SK-N-SH (cell line): ENCODE measurements at regions of chr7 and their contacts with region 1.

Region 1: DNA sequence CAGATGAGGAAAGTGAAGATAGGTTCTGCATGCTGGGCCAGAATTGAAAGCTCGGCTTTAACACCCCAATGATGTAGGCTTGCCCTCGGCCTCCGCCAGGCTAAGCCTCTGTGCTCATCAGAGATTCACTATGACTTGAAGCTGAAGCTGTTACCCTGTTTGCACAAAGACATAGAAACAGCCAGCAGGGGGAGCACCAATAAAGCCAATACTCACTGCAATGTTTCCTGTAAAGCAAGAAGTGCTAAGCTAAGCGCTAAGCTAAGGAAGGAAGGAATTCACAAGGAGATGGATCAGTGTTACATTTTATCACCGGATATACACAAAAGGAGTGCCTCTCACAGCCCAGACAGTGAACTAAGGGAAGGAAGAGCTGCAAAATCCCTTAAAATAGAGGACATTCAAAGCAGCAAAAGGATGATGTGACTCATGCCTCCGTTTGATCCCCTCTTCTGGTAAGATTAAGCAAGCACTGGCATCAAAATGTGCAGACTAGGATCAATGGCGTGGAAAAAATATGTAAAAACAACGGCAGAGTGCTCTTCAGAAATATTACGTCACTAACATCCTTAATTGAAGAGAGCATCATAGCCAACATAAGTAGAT is 153.8 kb downstream of the COBL start:
- DNase-seq: peak; percentile 64
- H3K4me3 ChIP-seq: no peak overlapping the region; a peak in 1 of 4 replicates
- H3K27ac ChIP-seq: no peak overlapping the region
- H3K4me1 ChIP-seq: no peaks in the 10 kb centered on the region
- H3K27me3 ChIP-seq: peaks cover 12% of the 10 kb centered on the region; the same call in 1 of the 2 replicates
- CTCF ChIP-seq: peak; percentile 99
- EP300 ChIP-seq: no peak
- RAD21 ChIP-seq: peak; percentile 83

Region 2: DNA sequence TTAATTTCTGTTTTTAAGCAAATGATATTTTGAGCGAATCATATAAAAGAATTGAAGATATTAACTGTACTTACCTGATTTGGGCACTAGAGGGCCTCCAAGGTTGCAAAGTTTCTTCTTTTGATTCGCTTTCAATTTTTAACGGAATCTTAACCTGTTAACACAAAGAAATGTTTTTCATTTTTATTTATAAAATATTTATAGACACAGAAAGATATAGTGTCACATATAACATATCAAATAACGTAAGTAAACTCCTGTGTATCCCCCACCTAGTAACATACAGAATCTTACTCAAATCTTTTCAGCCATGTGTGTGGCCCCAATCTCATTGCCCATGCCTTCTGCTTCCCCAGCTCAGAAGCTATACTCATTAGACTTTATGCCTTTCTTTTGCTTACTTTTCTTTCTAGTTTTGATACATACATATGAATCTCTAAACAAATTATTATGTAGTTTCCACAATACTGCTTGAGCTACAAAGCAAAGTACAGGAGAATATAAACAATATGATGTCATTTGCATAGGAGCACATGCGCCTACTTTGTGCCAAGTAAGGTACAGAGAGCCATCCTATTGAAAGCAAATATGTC is 1020.3 kb before region 1 on chr7:
- CTCF ChIA-PET with region 1: interaction called, 15 read pairs
- POLR2A ChIA-PET with region 1: no interaction called
- DNase-seq: no peak
- H3K4me3 ChIP-seq: no peak overlapping the region; a peak in 1 of 4 replicates
- H3K27ac ChIP-seq: no peak overlapping the region
- H3K4me1 ChIP-seq: no peaks in the 10 kb centered on the region
- H3K27me3 ChIP-seq: no peaks in the 10 kb centered on the region
- CTCF ChIP-seq: peak; percentile 93
- EP300 ChIP-seq: no peak
- RAD21 ChIP-seq: peak; percentile 82

Region 3: DNA sequence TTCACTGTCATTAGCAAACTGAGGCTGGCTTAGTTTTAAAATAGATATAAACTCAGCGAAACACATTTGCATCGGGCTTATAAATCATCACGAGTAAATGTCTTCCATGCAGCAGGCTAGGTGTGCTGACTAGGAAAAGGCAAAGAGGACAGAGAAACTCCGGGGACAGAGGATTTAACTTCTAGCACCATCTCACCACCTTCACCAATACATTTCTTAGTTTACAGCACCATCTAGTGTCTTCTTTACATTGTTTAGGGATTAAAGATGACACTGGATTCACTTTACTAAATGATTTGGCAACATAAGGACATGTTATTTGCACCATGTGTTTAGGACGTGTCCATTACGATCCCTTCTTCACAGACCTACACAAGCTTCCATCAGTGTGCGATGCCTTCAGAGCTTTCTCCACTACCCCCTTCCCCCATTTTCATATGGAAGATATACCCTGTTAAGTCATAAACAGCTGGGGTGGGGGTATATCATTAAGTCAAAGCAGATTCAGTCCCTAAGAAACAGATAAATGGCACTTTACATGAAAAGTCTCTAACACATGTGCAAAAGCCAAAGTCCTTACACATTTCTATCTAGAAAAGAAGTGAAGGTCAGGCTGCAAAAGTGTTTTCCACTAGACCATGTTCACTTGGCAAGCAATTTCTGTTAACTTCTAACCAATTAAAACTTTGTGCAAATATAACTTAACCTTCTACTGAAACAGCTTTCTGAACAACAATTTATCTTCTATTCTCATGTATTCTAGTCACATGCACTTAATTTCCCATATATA is 483.4 kb before region 1 on chr7:
- CTCF ChIA-PET with region 1: interaction called, 13 read pairs
- POLR2A ChIA-PET with region 1: no interaction called
- DNase-seq: peak; percentile 80
- H3K4me3 ChIP-seq: no peak overlapping the region
- H3K27ac ChIP-seq: no peak overlapping the region
- H3K4me1 ChIP-seq: peaks cover 0 to 22% of the 10 kb centered on the region in 2 experiments; a peak in 2 of 4 replicates
- H3K27me3 ChIP-seq: no peaks in the 10 kb centered on the region
- CTCF ChIP-seq: peak; percentile 68
- EP300 ChIP-seq: no peak
- RAD21 ChIP-seq: peak; percentile 99

Region 4: DNA sequence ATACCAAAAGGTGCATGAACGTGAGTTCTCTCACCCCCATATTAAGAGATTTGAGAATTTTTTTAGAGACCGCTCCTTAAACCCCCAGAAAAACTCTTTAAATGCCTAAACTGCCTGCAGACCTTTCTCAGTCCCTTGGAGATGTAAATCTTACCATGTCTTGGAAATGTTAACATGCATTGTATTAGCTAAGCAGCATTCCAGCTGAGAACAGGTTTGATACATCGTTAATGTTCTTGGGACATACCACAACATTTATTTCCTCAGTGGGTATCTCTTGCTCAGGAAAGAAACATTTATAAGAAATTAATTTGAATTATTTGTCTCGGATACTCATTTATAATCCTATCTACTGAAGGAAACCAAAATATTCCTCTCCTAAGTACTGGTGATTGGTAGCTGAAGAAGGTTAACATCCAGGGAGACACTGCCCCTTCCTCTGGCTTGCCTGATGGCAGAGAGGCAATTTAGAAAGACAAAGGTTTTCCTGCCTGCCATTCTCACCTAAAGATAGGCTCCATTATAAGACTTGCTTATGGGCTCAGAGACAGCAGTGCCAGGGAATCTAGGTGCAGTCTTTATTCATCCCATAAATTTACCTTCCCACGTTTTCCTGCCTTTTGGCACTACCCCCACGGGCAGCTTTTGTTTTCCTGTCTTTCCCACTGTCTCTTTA is 12.6 kb after region 1 on chr7:
- CTCF ChIA-PET with region 1: interaction called, 99 read pairs
- POLR2A ChIA-PET with region 1: no interaction called
- DNase-seq: no peak
- H3K4me3 ChIP-seq: no peak overlapping the region
- H3K27ac ChIP-seq: no peak overlapping the region
- H3K4me1 ChIP-seq: no peaks in the 10 kb centered on the region
- H3K27me3 ChIP-seq: peaks cover 12% of the 10 kb centered on the region
- CTCF ChIP-seq: no peak
- EP300 ChIP-seq: no peak
- RAD21 ChIP-seq: no peak

Region 5: GRCh38 chr7:51350200-51350921 is 187.5 kb after region 1 on chr7:
- CTCF ChIA-PET with region 1: interaction called, 16 read pairs
- POLR2A ChIA-PET with region 1: no interaction called
- DNase-seq: no peak
- H3K4me3 ChIP-seq: no peak overlapping the region
- H3K27ac ChIP-seq: no peak overlapping the region
- H3K4me1 ChIP-seq: no peaks in the 10 kb centered on the region
- H3K27me3 ChIP-seq: no peaks in the 10 kb centered on the region
- CTCF ChIP-seq: no peak
- EP300 ChIP-seq: no peak
- RAD21 ChIP-seq: no peak

Region 6: GRCh38 chr7:51376420-51377092 is 213.7 kb after region 1 on chr7:
- CTCF ChIA-PET with region 1: interaction called, 379 read pairs
- POLR2A ChIA-PET with region 1: no interaction called
- DNase-seq: no peak
- H3K4me3 ChIP-seq: no peak overlapping the region
- H3K27ac ChIP-seq: no peak overlapping the region
- H3K4me1 ChIP-seq: no peaks in the 10 kb centered on the region
- H3K27me3 ChIP-seq: no peaks in the 10 kb centered on the region
- CTCF ChIP-seq: no peak
- EP300 ChIP-seq: no peak
- RAD21 ChIP-seq: no peak